Endothelial cell of umbilical vein (primary cell): ENCODE measurements at regions of chr17 and their contacts with region 1.

Region 1: DNA sequence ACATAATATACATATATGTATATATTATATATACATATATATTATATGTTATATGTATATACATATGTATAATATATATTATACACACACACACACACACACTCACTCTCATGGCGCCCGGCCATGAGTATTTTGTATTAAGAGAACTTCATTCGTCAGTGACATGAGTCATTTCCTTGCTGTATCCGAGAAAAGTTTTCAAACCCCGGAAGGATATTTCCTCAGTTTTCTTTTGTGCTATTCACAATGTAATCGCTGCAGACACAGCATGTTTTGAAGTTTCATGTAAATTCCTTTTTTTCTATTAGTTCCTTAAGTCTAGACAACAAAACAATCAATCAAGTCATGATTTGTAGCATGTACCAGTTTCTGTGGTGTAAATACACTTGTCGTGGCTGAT is 33.3 kb downstream of the OR1D5 start:
- DNase-seq: peak; percentile 97
- H3K4me3 ChIP-seq: no peak overlapping the region
- H3K27ac ChIP-seq: peak overlapping the region; percentile 94
- H3K4me1 ChIP-seq: peaks cover 16% of the 10 kb centered on the region
- H3K27me3 ChIP-seq: no peaks in the 10 kb centered on the region
- CTCF ChIP-seq: no peak
- POLR2A ChIP-seq: peak; percentile 42

Region 2: DNA sequence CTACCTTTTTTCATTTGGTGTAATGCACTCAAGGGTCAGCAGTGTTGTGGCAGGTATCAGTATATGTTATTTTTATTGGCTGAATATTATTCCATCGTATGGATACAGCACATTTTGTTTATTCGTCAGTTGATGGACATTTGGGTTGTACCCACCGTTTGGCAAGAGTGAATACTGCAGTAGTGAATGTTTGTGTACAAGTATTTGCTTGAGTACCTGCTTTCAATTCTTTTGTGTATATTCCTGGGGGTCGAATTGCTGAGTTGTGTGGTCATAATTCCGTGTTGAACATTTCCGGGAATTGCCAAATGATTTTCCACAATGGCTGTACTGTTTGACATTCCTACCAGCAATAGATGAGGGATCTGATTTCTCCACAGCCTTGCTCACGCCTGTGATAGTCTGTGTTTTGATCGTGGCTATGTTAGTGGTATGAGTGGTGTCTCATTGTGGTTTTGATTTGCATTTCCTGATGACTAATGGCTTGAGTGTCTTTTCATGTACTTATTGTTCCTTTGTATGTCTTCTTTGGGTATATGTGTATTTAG is 75.1 kb before region 1 on chr17:
- CTCF ChIA-PET with region 1: no interaction called
- POLR2A ChIA-PET with region 1: no interaction called
- dilution Hi-C with region 1: no loop called
- intact Hi-C with region 1: loop called (anchors 1 kb)
- DNase-seq: peak; percentile 88
- H3K4me3 ChIP-seq: no peak overlapping the region
- H3K27ac ChIP-seq: peak overlapping the region; percentile 77
- H3K4me1 ChIP-seq: peaks cover 25% of the 10 kb centered on the region
- H3K27me3 ChIP-seq: no peaks in the 10 kb centered on the region
- CTCF ChIP-seq: no peak
- POLR2A ChIP-seq: no peak

Region 3: GRCh38 chr17:3004133-3004801 is 25.8 kb before region 1 on chr17:
- CTCF ChIA-PET with region 1: no interaction called
- POLR2A ChIA-PET with region 1: no interaction called
- dilution Hi-C with region 1: no loop called
- intact Hi-C with region 1: loop called (anchors 1 kb)
- DNase-seq: peak; percentile 99
- H3K4me3 ChIP-seq: no peak overlapping the region
- H3K27ac ChIP-seq: peak overlapping the region; percentile 85
- H3K4me1 ChIP-seq: peaks cover 17% of the 10 kb centered on the region
- H3K27me3 ChIP-seq: no peaks in the 10 kb centered on the region
- CTCF ChIP-seq: no peak
- POLR2A ChIP-seq: peak; percentile 20

Region 4: GRCh38 chr17:3048767-3049471 is 18.8 kb after region 1 on chr17:
- CTCF ChIA-PET with region 1: interaction called, 11 read pairs
- POLR2A ChIA-PET with region 1: no interaction called
- dilution Hi-C with region 1: no loop called
- intact Hi-C with region 1: no loop called
- DNase-seq: peak; percentile 99
- H3K4me3 ChIP-seq: peak overlapping the region; percentile 44 to 75 (median 72)
- H3K27ac ChIP-seq: no peak overlapping the region
- H3K4me1 ChIP-seq: no peaks in the 10 kb centered on the region
- H3K27me3 ChIP-seq: no peaks in the 10 kb centered on the region
- CTCF ChIP-seq: peak; percentile 74 to 86
- POLR2A ChIP-seq: peak; percentile 70

Region 5: DNA sequence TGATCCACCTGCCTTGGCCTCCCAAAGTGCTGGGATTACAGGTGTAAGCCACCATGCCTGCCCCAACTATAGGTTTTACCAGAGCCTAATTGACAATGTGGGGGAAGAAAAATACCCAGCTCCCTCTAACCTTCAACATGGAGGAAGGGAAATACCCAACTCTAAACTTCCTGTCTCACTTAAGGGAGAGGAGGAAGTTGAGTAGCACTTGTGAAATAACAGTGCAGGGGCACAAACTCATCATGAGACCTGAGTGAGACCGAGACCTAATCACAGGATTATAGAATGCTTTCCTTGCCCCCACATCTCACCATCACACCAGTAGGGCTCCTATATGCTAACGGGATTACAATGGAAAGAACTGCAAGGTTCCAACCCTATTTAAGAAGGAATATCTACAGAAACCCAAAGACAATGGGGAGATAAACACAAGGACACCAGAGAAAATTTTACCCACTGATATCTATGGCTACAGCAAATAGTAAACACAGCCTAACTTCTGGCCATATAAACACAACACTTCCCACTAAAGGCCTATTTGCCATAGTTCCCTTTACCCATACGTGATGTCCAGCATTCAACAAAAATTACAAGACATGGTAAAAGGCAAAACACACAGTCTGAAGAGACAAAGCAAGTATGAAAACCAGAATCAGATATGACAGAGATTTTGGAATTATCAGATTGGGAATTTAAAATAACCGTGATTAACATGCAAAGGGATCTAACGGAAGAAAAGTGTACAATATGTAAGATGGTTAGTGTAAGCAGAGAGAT is 241.2 kb after region 1 on chr17:
- CTCF ChIA-PET with region 1: no interaction called
- POLR2A ChIA-PET with region 1: no interaction called
- dilution Hi-C with region 1: no loop called
- intact Hi-C with region 1: no loop called
- DNase-seq: no peak
- H3K4me3 ChIP-seq: no peak overlapping the region
- H3K27ac ChIP-seq: no peak overlapping the region
- H3K4me1 ChIP-seq: no peaks in the 10 kb centered on the region
- H3K27me3 ChIP-seq: no peaks in the 10 kb centered on the region
- CTCF ChIP-seq: no peak
- POLR2A ChIP-seq: no peak

Region 6: DNA sequence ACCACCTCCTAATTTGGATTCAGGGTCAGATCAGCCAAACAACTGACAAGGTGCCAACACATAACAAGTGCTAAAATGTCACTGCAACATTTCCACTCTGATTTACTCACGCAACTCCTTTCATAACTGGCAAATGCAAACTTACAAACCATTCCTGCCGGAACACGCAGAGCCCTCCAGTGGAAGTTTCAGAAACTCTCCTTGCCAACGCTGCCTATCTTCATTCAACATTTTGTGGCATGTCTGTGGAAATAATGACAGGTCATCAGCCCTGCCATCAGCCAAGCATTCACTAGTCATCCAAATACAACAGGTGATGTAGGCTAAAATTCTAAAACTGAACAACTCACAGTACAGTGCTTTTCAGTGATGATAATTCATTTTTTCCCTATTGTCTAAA is 305.8 kb after region 1 on chr17:
- CTCF ChIA-PET with region 1: no interaction called
- POLR2A ChIA-PET with region 1: no interaction called
- dilution Hi-C with region 1: no loop called
- intact Hi-C with region 1: no loop called
- DNase-seq: no peak
- H3K4me3 ChIP-seq: no peak overlapping the region
- H3K27ac ChIP-seq: no peak overlapping the region
- H3K4me1 ChIP-seq: no peaks in the 10 kb centered on the region
- H3K27me3 ChIP-seq: no peaks in the 10 kb centered on the region
- CTCF ChIP-seq: no peak
- POLR2A ChIP-seq: no peak